Natural killer cell (primary cell): ENCODE measurements at regions of chr1 and their contacts with region 1.

Region 1: DNA sequence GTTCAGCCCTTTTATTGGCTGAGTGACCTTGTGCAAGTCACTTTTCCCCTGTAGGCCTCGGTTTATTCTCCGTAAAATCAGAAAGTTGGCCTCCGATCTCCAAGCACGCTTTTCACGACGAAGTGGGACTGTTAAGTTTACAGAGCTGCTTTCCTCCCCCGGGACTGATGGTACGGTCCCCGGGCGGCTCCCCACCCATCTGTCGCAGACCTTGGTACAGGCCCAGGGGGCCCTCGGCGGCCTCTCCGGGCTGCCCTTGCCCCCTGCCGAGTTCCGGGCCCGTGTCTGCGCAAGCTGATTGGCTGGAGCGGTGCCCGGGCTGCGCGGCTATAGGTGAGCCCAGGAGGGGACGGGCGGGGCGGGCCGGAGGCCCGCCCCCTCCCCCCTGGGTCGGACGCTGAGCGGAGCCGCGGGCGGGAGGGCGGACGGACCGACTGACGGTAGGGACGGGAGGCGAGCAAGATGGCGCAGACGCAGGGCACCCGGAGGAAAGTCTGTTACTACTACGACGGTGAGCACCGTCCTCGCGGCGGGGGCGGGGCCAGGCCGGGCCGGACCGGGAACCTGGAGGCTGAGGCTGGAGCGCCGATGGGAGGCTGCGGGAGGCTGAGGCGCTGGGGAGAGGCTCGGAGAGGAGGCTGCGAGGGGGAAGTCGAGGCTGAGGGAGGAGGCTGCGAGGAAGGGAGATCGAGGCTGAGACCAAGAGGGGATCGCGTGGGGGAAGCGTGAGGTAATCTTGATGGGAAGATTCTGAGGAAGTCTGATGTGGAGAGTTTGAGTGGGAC is at the start of gene HDAC1:
- DNase-seq: peak; percentile 94 to 97
- ATAC-seq: peak; percentile 96 to 99 (median 97)
- H3K4me3 ChIP-seq: peak within 1 kb of the TSS; percentile 96
- H3K4me3 Mint-ChIP-seq: peak within 1 kb of the TSS; percentile 99
- H3K27ac ChIP-seq: peak within 1 kb of the TSS; percentile 77
- H3K27ac Mint-ChIP-seq: peak within 1 kb of the TSS; percentile 97 to 98
- H3K4me1 ChIP-seq: peaks cover 43% of the 10 kb centered on the region
- H3K4me1 Mint-ChIP-seq: peaks cover 37 to 44% of the 10 kb centered on the region in 2 donors
- H3K27me3 ChIP-seq: no peaks in the 10 kb centered on the region
- H3K27me3 Mint-ChIP-seq: no peaks in the 10 kb centered on the region
- CTCF ChIP-seq: no peak
- total RNA-seq, gene HDAC1: 110 to 133 (median 125) TPM

Region 2: GRCh38 chr1:32107742-32108661 is 183.9 kb before region 1 on chr1 and contains the start of gene KPNA6:
- intact Hi-C with region 1: loop called (anchors 1 kb)
- DNase-seq: peak; percentile 88 to 97
- ATAC-seq: peak; percentile 85 to 94 (median 89)
- H3K4me3 ChIP-seq: peak within 1 kb of the TSS; percentile 96
- H3K4me3 Mint-ChIP-seq: peak within 1 kb of the TSS; percentile 99
- H3K27ac ChIP-seq: peak within 1 kb of the TSS; percentile 90
- H3K27ac Mint-ChIP-seq: peak within 1 kb of the TSS; percentile 95 to 98
- H3K4me1 ChIP-seq: peaks cover 35% of the 10 kb centered on the region
- H3K4me1 Mint-ChIP-seq: peaks cover 38 to 43% of the 10 kb centered on the region in 2 donors
- H3K27me3 ChIP-seq: no peaks in the 10 kb centered on the region
- H3K27me3 Mint-ChIP-seq: no peaks in the 10 kb centered on the region
- CTCF ChIP-seq: no peak
- total RNA-seq, gene KPNA6: 48.6 to 59.0 (median 52.8) TPM

Region 3: GRCh38 chr1:32249831-32250525 is 41.9 kb before region 1 on chr1:
- intact Hi-C with region 1: loop called (anchors 2 kb)
- DNase-seq: peak; percentile 72 to 94
- ATAC-seq: peak; percentile 72 to 85 (median 82)
- H3K4me3 ChIP-seq: peak overlapping the region; percentile 4
- H3K4me3 Mint-ChIP-seq: peak overlapping the region; percentile 100
- H3K27ac ChIP-seq: peak overlapping the region; percentile 86
- H3K27ac Mint-ChIP-seq: peak overlapping the region; percentile 93 to 96
- H3K4me1 ChIP-seq: peaks cover 79% of the 10 kb centered on the region
- H3K4me1 Mint-ChIP-seq: peaks cover 56 to 71% of the 10 kb centered on the region in 2 donors
- H3K27me3 ChIP-seq: no peaks in the 10 kb centered on the region
- H3K27me3 Mint-ChIP-seq: no peaks in the 10 kb centered on the region
- CTCF ChIP-seq: no peak

Region 4: DNA sequence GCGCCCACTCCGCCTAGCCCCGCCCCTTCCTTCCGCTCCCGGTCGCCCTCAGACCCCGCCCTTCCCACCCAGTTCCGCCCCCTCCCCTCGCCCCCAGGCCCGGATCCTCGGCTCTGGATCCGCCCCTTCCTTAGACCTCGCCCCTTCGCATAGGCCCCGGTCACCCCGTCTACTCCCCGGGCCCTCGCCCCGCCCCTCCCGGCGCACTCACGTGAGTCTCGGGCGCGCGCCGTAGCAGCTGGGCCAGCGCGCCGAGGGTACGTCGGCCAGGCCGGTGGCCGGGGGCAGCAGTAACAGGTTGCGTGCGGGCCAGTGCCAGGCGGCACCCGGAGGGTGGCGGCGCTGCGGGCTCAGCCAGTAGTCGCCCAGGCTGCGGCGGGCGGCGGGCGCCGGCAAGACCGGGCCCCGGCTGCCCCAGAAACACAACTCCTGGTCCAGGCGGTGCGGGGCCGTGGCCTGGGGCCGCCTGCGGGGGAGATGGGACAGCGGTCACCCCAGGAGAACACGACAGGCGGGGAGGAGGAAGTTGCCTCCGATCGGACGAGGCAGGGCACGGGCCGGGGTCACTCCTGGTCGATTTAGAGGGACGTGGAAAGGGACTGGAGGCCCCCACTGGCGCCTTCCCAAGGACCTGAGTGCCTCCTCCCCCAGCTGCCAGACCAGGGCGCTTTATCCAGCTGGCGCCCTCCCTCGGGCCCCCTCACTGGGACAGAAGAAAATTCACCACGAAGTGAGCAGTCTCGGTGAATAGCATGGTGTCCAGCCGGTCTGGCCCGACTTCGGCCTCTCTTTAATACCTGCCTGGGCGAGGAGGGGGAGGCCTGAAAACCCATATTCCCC is 59.7 kb after region 1 on chr1:
- intact Hi-C with region 1: loop called (anchors 1 kb)
- DNase-seq: peak; percentile 88 to 97
- ATAC-seq: peak; percentile 93 to 97 (median 94)
- H3K4me3 ChIP-seq: peak overlapping the region; percentile 47
- H3K4me3 Mint-ChIP-seq: peak overlapping the region; percentile 76
- H3K27ac ChIP-seq: peak overlapping the region; percentile 66
- H3K27ac Mint-ChIP-seq: peak overlapping the region; percentile 64 to 72
- H3K4me1 ChIP-seq: peaks cover 39% of the 10 kb centered on the region
- H3K4me1 Mint-ChIP-seq: peaks cover 28 to 50% of the 10 kb centered on the region in 2 donors
- H3K27me3 ChIP-seq: no peaks in the 10 kb centered on the region
- H3K27me3 Mint-ChIP-seq: no peaks in the 10 kb centered on the region
- CTCF ChIP-seq: peak; percentile 0

Region 5: DNA sequence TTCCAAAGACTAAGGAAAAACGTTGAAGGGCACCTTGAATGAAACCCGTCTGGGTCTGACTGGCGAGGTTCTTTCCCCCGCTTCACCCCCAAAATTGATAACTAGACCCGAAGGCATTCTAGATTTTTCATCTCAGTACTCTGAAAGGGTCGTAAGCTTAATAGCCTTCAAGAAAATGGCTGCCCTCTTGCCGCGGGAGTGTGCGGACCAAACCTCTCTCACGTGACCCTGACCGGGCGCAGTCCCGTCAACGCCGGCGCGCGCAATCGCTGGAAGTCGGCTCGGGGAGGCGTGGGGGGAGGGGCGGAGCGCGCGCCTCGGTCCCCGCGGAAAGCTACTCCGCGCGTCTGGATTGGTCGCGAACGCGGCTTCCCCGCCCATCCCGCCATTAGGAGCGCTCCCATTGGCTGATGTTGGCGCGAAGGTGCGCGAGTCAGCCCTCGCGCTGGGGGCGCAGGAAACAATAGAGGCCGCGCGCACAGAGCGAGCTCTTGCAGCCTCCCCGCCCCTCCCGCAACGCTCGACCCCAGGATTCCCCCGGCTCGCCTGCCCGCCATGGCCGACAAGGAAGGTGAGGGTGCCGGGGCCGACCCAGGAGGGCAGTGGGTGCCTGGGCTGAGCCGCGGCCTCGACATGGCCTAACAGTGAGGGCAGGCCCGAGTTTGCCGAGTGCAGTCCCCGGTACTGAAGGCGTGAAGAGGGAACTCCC is 359.0 kb after region 1 on chr1 and contains the start of gene RBBP4:
- intact Hi-C with region 1: loop called (anchors 5 kb)
- DNase-seq: peak; percentile 99 to 100
- ATAC-seq: peak; percentile 82 to 94 (median 84)
- H3K4me3 ChIP-seq: peak within 1 kb of the TSS; percentile 81
- H3K4me3 Mint-ChIP-seq: peak within 1 kb of the TSS; percentile 99
- H3K27ac ChIP-seq: peak within 1 kb of the TSS; percentile 98
- H3K27ac Mint-ChIP-seq: peak within 1 kb of the TSS; percentile 94 to 100
- H3K4me1 ChIP-seq: peaks cover 36% of the 10 kb centered on the region
- H3K4me1 Mint-ChIP-seq: peaks cover 52 to 53% of the 10 kb centered on the region in 2 donors
- H3K27me3 ChIP-seq: no peaks in the 10 kb centered on the region
- H3K27me3 Mint-ChIP-seq: no peaks in the 10 kb centered on the region
- CTCF ChIP-seq: no peak
- total RNA-seq, gene RBBP4: 199 to 241 (median 224) TPM